ENCODE measurements at regions of chr18 and their contacts with region 1.

Region 1: DNA sequence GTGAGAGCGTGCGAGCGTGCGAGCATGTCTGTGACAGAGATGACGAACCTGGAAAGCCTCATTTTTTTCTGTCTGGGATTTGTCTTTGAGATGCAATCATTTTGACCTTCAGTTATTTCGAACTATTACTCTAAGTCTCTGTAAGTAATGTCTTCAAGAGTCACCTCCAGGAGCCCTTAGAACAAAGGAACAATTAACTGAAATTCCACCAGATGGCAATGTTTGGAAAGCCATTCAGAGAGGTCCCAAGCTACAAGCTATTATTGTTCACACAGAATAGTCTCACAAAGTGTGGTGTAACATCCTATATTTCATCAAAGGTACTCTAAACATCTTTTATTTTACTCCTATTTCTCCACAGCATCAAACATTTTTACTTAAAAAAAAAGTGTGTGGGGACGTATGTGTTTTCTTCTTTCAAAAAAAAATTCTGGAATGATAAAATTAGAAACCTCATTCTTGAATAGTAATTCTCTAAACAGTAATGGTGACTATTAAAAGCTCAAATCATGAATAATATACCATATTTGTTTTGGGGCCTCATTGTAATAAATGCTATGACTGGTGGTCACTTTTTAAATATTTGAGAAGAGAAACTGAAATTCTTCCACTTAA is 35.1 kb upstream of the MAPRE2 start:
- DNase-seq: no peak
- H3K4me3 ChIP-seq: no peak overlapping the region
- H3K27ac ChIP-seq: no peak overlapping the region
- H3K4me1 ChIP-seq: no peaks in the 10 kb centered on the region
- H3K27me3 ChIP-seq: no peaks in the 10 kb centered on the region
- CTCF ChIP-seq: peak; percentile 54 to 69 (median 60)
- EP300 ChIP-seq: no peak
- POLR2A ChIP-seq: no peak

Region 2: DNA sequence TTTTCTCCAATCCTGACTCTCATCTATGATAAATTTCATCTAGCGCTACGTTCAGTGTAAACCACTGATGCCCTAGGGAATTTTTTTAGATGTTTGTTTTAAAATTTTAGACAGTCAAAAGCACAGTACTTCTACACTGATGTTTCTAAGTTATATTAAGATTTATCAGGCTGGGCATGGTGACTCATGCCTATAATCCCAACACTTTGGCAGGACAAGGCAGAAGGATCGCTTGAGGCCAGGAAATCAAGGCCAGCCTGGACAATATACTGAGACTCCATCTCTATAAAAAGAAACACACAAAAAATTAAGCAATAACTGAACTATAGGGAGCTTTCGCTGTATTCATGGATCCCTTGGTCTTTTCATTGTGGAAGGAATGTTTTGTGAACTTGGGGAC is 15.5 kb before region 1 on chr18:
- in situ Hi-C with region 1: no loop called
- intact Hi-C with region 1: no loop called
- DNase-seq: no peak
- H3K4me3 ChIP-seq: no peak overlapping the region
- H3K27ac ChIP-seq: no peak overlapping the region
- H3K4me1 ChIP-seq: peaks cover 0 to 3% (median 0%) of the 10 kb centered on the region in 4 donors
- H3K27me3 ChIP-seq: no peaks in the 10 kb centered on the region
- CTCF ChIP-seq: no peak
- EP300 ChIP-seq: no peak
- POLR2A ChIP-seq: no peak

Region 3: GRCh38 chr18:35143622-35144596 is 137.8 kb after region 1 on chr18:
- in situ Hi-C with region 1: loop called (anchors 10 to 25 kb)
- intact Hi-C with region 1: loop called (anchors 2 kb)
- DNase-seq: peak; percentile 53
- H3K4me3 ChIP-seq: no peak overlapping the region
- H3K27ac ChIP-seq: peak overlapping the region in 1 of 4 donors; percentile 24
- H3K4me1 ChIP-seq: peaks cover 0 to 8% (median 0%) of the 10 kb centered on the region in 4 donors
- H3K27me3 ChIP-seq: no peaks in the 10 kb centered on the region
- CTCF ChIP-seq: peak; percentile 63 to 72 (median 67)
- EP300 ChIP-seq: no peak
- POLR2A ChIP-seq: no peak

Region 4: GRCh38 chr18:35653392-35654135 is 647.5 kb after region 1 on chr18:
- in situ Hi-C with region 1: no loop called
- intact Hi-C with region 1: no loop called
- DNase-seq: no peak
- H3K4me3 ChIP-seq: no peak overlapping the region
- H3K27ac ChIP-seq: no peak overlapping the region
- H3K4me1 ChIP-seq: no peaks in the 10 kb centered on the region
- H3K27me3 ChIP-seq: no peaks in the 10 kb centered on the region
- CTCF ChIP-seq: no peak
- EP300 ChIP-seq: no peak
- POLR2A ChIP-seq: no peak

Measured in transverse colon (tissue), 4 donors.